IMR-90 (cell line): ENCODE measurements at regions of chr12 and their contacts with region 1.

Region 1: GRCh38 chr12:13196130-13196921 is at the start of gene EMP1:
- DNase-seq: peak; percentile 100
- ATAC-seq: peak; percentile 70
- H3K4me3 ChIP-seq: peak within 1 kb of the TSS; percentile 73
- H3K27ac ChIP-seq: peak within 1 kb of the TSS; percentile 94
- H3K4me1 ChIP-seq: peaks cover 20% of the 10 kb centered on the region
- H3K27me3 ChIP-seq: no peaks in the 10 kb centered on the region
- CTCF ChIP-seq: no peak
- POLR2A ChIP-seq: peak; percentile 99
- RAD21 ChIP-seq: 0 out of 2 replicates have a peak, but pooled peaks have one; percentile 3
- total RNA-seq, gene EMP1: 137 and 570 TPM in 2 replicates

Region 2: GRCh38 chr12:12661086-12661485 is 535.2 kb before region 1 on chr12:
- CTCF ChIA-PET with region 1: no interaction called
- POLR2A ChIA-PET with region 1: no interaction called
- dilution Hi-C with region 1: no loop called
- in situ Hi-C with region 1: no loop called
- intact Hi-C with region 1: no loop called
- DNase-seq: peak; percentile 76
- ATAC-seq: peak; percentile 35
- H3K4me3 ChIP-seq: no peak overlapping the region
- H3K27ac ChIP-seq: no peak overlapping the region
- H3K4me1 ChIP-seq: no peaks in the 10 kb centered on the region
- H3K27me3 ChIP-seq: no peaks in the 10 kb centered on the region
- CTCF ChIP-seq: no peak
- POLR2A ChIP-seq: no peak
- RAD21 ChIP-seq: no peak

Region 3: GRCh38 chr12:13099844-13100604 is 96.3 kb before region 1 on chr12:
- CTCF ChIA-PET with region 1: interaction called, 4 read pairs
- POLR2A ChIA-PET with region 1: interaction called, 10 read pairs
- dilution Hi-C with region 1: no loop called
- in situ Hi-C with region 1: no loop called
- intact Hi-C with region 1: loop called (anchors 1 kb)
- DNase-seq: no peak
- ATAC-seq: no peak
- H3K4me3 ChIP-seq: no peak overlapping the region
- H3K27ac ChIP-seq: peak overlapping the region; percentile 88
- H3K4me1 ChIP-seq: peaks cover 44% of the 10 kb centered on the region
- H3K27me3 ChIP-seq: no peaks in the 10 kb centered on the region
- CTCF ChIP-seq: no peak
- POLR2A ChIP-seq: no peak
- RAD21 ChIP-seq: no peak

Region 4: GRCh38 chr12:13289653-13290289 is 93.4 kb after region 1 on chr12:
- CTCF ChIA-PET with region 1: no interaction called
- POLR2A ChIA-PET with region 1: no interaction called
- dilution Hi-C with region 1: no loop called
- in situ Hi-C with region 1: no loop called
- intact Hi-C with region 1: no loop called
- DNase-seq: no peak
- ATAC-seq: no peak
- H3K4me3 ChIP-seq: no peak overlapping the region
- H3K27ac ChIP-seq: no peak overlapping the region
- H3K4me1 ChIP-seq: no peaks in the 10 kb centered on the region
- H3K27me3 ChIP-seq: peaks cover 2% of the 10 kb centered on the region
- CTCF ChIP-seq: no peak
- POLR2A ChIP-seq: no peak
- RAD21 ChIP-seq: no peak